ENCODE measurements at regions of chr4 and their contacts with region 1.

Region 1: DNA sequence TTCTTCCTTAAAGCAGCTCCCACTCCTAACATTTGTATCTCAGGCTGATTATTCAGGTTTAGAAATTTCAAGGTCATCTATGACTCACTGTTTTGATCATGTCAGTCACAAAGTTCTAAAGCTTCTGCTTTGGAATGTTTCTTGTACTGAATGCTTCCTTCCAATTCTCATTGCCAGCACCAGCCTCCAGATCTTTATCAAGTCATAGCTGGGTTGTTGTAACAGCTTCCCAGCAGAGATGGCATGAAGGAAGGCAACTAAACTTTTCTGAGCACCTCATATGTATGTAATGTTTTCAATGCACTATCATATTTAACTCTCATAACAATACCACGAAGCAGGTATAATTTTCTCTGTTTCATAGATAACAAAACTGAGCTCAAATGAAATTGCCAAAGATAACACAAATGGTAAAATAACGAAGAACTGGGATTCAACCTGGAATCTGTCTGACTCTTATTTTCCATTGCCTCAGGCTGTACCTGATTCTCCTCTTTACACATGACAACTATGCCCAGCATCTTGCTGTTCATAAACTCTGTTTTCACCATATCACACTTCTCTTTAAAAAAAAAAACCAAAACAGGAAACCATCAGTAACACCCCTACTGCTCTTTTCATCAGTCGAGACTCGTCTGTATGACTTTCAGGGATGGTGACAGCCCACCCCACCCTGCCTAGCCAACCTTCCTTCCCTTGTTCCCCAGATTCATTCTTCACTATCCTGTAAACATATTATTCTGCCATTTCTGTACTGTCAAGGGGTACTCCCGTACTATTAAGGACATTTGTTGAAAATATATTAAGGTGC is 13.4 kb downstream of the TRPC3 start:
- DNase-seq: no peak
- ATAC-seq: no peak
- H3K4me3 Mint-ChIP-seq: no peak overlapping the region
- H3K27ac Mint-ChIP-seq: no peak overlapping the region
- H3K4me1 Mint-ChIP-seq: peaks cover 10% of the 10 kb centered on the region
- H3K27me3 Mint-ChIP-seq: peaks cover 46% of the 10 kb centered on the region

Region 2: GRCh38 chr4:121950212-121950679 is 11.8 kb after region 1 on chr4:
- CTCF ChIA-PET with region 1: interaction called, 22 read pairs
- POLR2A ChIA-PET with region 1: no interaction called
- DNase-seq: peak; percentile 89
- ATAC-seq: peak; percentile 87
- H3K4me3 Mint-ChIP-seq: peak overlapping the region; percentile 85
- H3K27ac Mint-ChIP-seq: peak overlapping the region; percentile 40
- H3K4me1 Mint-ChIP-seq: peaks cover 17% of the 10 kb centered on the region
- H3K27me3 Mint-ChIP-seq: peaks cover 53% of the 10 kb centered on the region

Region 3: DNA sequence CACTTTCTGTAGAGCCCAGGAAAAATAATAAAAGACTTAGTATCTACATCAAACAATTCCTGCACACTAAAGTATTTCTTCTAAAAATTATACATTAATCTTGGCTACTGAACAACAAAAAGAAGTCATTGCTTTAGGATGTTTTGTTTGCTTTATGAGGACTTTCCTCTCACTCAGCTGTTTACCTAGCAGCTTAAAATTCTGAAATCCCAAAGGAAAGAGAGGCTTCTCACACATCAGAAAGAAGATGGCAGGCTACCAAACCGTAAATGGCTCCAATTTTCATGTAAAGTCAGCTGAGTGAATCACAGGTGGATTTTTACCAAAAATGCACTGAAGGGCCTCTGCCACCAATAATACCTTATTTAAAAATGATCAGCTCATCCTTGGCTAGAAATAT is 22.3 kb after region 1 on chr4:
- CTCF ChIA-PET with region 1: no interaction called
- POLR2A ChIA-PET with region 1: no interaction called
- DNase-seq: no peak
- ATAC-seq: no peak
- H3K4me3 Mint-ChIP-seq: no peak overlapping the region
- H3K27ac Mint-ChIP-seq: no peak overlapping the region
- H3K4me1 Mint-ChIP-seq: no peaks in the 10 kb centered on the region
- H3K27me3 Mint-ChIP-seq: peaks cover 34% of the 10 kb centered on the region

Measured in activated CD8-positive, alpha-beta T cell treated with anti-CD3 and anti-CD28 coated beads, Interleukin-2, amount 10 ng/mL, durations not matched to agents 7 days and 5 days (primary cell).